ENCODE measurements at regions of chr1 and their contacts with region 1.

Region 1: DNA sequence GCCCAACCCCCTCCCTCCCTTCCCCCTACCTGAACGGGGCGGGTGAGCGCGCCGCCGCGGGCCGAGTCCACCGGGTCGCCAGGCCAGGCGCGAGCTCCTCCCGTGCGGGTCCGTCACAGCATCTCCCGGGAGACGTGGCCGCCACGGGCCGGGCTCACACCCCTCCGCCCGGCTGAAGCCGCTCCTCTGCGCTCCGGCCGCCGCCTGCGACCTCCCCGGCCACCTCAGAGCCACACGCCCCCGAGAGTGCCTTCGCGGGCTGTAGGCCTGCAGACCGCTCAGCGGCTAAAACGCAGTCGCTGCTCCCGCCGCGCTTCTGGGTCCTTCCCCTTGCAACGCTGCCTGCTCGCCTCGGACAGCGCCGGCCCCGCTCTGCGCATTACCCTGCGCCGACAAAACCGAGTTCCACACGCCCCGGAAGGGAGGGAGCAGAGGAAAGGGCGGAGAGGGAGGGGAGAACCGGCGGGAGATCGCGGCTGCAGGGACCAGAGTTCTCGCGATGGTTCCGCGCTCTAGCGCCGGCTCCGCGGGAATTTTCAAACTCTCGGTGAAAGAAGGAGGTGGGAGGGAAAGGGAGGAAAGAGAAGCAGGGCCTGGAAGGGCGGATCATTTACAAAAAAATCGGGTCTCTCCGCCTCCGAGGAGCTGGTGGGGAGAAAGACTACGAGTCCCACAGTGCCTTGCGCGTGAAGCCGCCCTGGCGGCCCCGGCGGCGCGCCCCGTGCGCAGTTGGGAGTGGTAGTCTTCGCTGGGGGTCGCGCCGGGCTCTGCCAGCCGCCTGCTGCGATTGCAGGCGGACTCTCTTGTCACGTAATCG is at the start of gene AHCTF1:
- DNase-seq: peak; percentile 94
- H3K4me3 Mint-ChIP-seq: peak within 1 kb of the TSS; percentile 92
- H3K27ac Mint-ChIP-seq: peak within 1 kb of the TSS; percentile 92
- H3K4me1 Mint-ChIP-seq: peaks cover 19% of the 10 kb centered on the region
- H3K27me3 Mint-ChIP-seq: no peaks in the 10 kb centered on the region
- total RNA-seq, gene AHCTF1: 47.2 and 47.7 TPM in 2 replicates

Region 2: DNA sequence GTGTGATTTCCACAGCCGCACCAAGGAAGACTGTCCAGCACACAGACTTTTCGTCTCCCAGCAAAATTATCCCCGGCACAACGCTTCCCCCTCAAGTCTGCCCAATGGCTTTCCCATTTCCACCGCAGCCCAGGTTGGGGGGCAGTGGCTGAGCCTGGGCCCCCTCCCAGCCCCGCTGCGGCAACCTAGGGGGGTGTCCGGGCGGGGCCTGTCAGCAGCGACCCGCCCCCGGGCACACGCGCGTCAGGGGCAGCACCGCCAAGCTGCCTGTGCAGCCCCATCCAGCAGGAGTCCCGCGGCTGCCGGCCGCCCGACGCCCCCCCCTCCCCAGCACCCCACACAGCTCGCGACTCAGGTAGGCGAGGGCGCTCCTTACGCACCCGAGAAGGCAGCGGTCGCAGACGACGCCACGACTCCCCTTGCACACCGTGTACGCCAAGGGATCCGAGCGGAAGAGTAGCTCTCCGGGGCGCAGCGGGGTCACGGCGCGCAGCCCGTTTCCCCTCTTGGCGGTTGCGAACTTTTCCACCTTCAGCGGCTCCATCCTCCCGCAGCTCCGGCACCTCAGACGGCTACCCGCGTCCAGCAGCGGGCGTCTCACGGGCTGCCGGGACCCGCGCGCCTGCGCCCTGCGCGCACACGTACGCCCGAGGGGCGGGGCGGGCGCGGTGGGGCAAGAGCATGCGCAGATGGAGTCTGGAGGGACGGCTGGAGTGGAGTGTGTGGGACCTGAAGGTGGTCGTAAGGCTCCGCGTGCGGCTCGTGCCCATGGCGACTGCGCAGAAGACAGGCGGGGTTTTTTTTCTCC is 424.9 kb before region 1 on chr1 and contains the start of gene SMYD3:
- intact Hi-C with region 1: loop called (anchors 10 kb)
- DNase-seq: peak; percentile 67
- H3K4me3 Mint-ChIP-seq: peak within 1 kb of the TSS; percentile 85
- H3K27ac Mint-ChIP-seq: peak within 1 kb of the TSS; percentile 90
- H3K4me1 Mint-ChIP-seq: peaks cover 20% of the 10 kb centered on the region
- H3K27me3 Mint-ChIP-seq: no peaks in the 10 kb centered on the region
- total RNA-seq, gene SMYD3: 24.1 and 26.2 TPM in 2 replicates

Region 3: GRCh38 chr1:246724016-246724730 is 207.6 kb before region 1 on chr1 and contains the start of gene SCCPDH:
- intact Hi-C with region 1: loop called (anchors 5 kb)
- DNase-seq: peak; percentile 63
- H3K4me3 Mint-ChIP-seq: peak within 1 kb of the TSS; percentile 92
- H3K27ac Mint-ChIP-seq: peak within 1 kb of the TSS; percentile 73
- H3K4me1 Mint-ChIP-seq: peaks cover 9% of the 10 kb centered on the region
- H3K27me3 Mint-ChIP-seq: no peaks in the 10 kb centered on the region
- total RNA-seq, gene SCCPDH: 34.1 and 34.3 TPM in 2 replicates

Region 4: GRCh38 chr1:246856371-246856770 is 75.4 kb before region 1 on chr1:
- intact Hi-C with region 1: no loop called
- DNase-seq: no peak
- H3K4me3 Mint-ChIP-seq: no peak overlapping the region
- H3K27ac Mint-ChIP-seq: no peak overlapping the region
- H3K4me1 Mint-ChIP-seq: no peaks in the 10 kb centered on the region
- H3K27me3 Mint-ChIP-seq: no peaks in the 10 kb centered on the region

Region 5: GRCh38 chr1:247078261-247079140 is 146.7 kb after region 1 on chr1 and contains the start of gene ZNF670:
- intact Hi-C with region 1: loop called (anchors 2 kb)
- DNase-seq: peak; percentile 84
- H3K4me3 Mint-ChIP-seq: peak within 1 kb of the TSS; percentile 88
- H3K27ac Mint-ChIP-seq: peak within 1 kb of the TSS; percentile 84
- H3K4me1 Mint-ChIP-seq: peaks cover 20% of the 10 kb centered on the region
- H3K27me3 Mint-ChIP-seq: peaks cover 5% of the 10 kb centered on the region
- total RNA-seq, gene ZNF670: 2.3 and 3.0 TPM in 2 replicates

Region 6: DNA sequence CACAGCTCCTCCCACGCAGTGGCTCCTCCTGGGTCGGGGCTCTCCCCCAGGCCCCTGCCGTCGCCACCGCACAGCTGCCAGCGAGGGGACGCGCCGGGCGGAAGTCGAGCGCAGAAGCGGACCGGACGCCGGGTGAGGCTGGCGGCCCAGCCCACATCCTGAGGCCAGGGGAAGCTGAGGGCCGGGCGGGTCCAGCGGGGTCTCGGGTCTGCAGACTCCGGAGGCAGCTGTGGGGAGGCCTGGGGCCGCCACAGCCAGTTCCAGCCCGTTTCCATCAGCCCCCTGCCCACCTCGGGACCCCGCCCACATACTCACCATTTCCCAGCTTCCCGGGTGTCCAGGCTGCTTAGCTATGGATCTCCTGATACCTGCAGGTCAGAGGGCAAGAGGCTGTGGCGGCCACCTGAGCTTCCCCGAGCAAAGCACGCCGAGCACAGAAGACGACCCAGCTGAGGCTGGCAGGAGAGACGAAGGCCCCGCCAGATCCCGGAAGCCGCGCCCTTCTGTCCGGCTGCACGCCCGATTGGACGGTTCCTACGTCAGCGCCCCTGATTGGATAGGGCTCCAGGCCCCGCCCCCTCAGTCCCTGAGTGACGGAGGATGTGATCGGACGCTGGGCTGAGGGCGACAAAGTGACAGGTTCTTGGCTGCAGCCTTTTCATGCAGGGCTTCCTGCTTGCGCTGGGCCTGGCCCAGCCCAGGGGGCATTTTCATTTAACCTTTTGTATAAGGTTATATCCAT is 278.8 kb after region 1 on chr1:
- intact Hi-C with region 1: loop called (anchors 2 kb)
- DNase-seq: peak; percentile 94
- H3K4me3 Mint-ChIP-seq: peak overlapping the region; percentile 86
- H3K27ac Mint-ChIP-seq: peak overlapping the region; percentile 93
- H3K4me1 Mint-ChIP-seq: peaks cover 48% of the 10 kb centered on the region
- H3K27me3 Mint-ChIP-seq: no peaks in the 10 kb centered on the region

Region 7: GRCh38 chr1:248825909-248826760 is 1894.4 kb after region 1 on chr1 and contains the start of gene SH3BP5L:
- intact Hi-C with region 1: loop called (anchors 5 kb)
- DNase-seq: peak; percentile 88
- H3K4me3 Mint-ChIP-seq: peak within 1 kb of the TSS; percentile 92
- H3K27ac Mint-ChIP-seq: peak within 1 kb of the TSS; percentile 99
- H3K4me1 Mint-ChIP-seq: peaks cover 37% of the 10 kb centered on the region
- H3K27me3 Mint-ChIP-seq: no peaks in the 10 kb centered on the region
- total RNA-seq, gene SH3BP5L: 27.1 TPM in 2 replicates